Aorta (tissue), 5 donors: ENCODE measurements at regions of chr2 and their contacts with region 1.

Region 1: GRCh38 chr2:218269899-218270720 is at the starts of genes AAMP and PNKD:
- DNase-seq: peak; percentile 100
- ATAC-seq: peak; percentile 97
- H3K4me3 ChIP-seq: peak within 1 kb of the TSS; percentile 74 to 92
- H3K27ac ChIP-seq: peak within 1 kb of the TSS in 1 of 2 donors; percentile 9
- H3K4me1 ChIP-seq: no peaks in the 10 kb centered on the region
- H3K27me3 ChIP-seq: no peaks in the 10 kb centered on the region
- total RNA-seq, gene AAMP: 50.8 to 54.7 TPM
- total RNA-seq, gene PNKD: 26.9 to 40.2 TPM

Region 2: DNA sequence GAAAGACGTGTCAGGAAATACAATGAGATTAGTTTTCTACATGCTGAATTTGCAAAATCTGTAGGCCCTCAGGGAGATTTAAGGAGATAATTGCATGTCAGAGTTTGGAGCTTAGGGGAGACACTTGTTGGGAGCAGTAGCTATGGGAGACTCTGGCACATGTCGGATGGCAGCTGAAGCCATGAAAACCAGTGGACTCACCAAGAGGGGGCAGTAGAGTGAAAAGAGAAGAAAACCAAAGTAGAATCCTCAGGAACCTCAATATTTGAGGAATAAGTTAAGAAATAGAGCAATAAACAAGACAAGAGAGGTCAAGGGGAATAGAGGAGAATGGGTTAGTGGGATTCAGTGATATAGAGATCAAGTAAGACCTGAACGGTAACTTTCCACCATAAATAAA is 176.2 kb before region 1 on chr2:
- intact Hi-C with region 1: no loop called
- DNase-seq: no peak
- ATAC-seq: no peak
- H3K4me3 ChIP-seq: no peak overlapping the region
- H3K27ac ChIP-seq: no peak overlapping the region
- H3K4me1 ChIP-seq: no peaks in the 10 kb centered on the region
- H3K27me3 ChIP-seq: no peaks in the 10 kb centered on the region

Region 3: GRCh38 chr2:218186355-218186766 is 83.7 kb before region 1 on chr2:
- intact Hi-C with region 1: loop called in 1 of 2 experiments (anchors 5 kb)
- DNase-seq: peak; percentile 70 to 83
- ATAC-seq: peak; percentile 89
- H3K4me3 ChIP-seq: no peak overlapping the region
- H3K27ac ChIP-seq: no peak overlapping the region
- H3K4me1 ChIP-seq: peaks cover 0 to 3% of the 10 kb centered on the region in 2 donors
- H3K27me3 ChIP-seq: no peaks in the 10 kb centered on the region

Region 4: GRCh38 chr2:218290316-218291261 is 20.5 kb after region 1 on chr2:
- intact Hi-C with region 1: loop called in 1 of 2 experiments (anchors 2 kb)
- DNase-seq: no peak
- ATAC-seq: no peak
- H3K4me3 ChIP-seq: peak overlapping the region; percentile 59 to 94
- H3K27ac ChIP-seq: peak overlapping the region; percentile 46 to 92
- H3K4me1 ChIP-seq: peaks cover 0 to 3% of the 10 kb centered on the region in 2 donors
- H3K27me3 ChIP-seq: no peaks in the 10 kb centered on the region

Region 5: GRCh38 chr2:218322895-218323808 is 53.0 kb after region 1 on chr2:
- intact Hi-C with region 1: no loop called
- DNase-seq: peak; percentile 87 to 90
- ATAC-seq: peak; percentile 82
- H3K4me3 ChIP-seq: peak overlapping the region; percentile 64 to 70
- H3K27ac ChIP-seq: no peak overlapping the region
- H3K4me1 ChIP-seq: no peaks in the 10 kb centered on the region
- H3K27me3 ChIP-seq: no peaks in the 10 kb centered on the region

Region 6: GRCh38 chr2:218568190-218569037 is 298.3 kb after region 1 on chr2 and contains the starts of genes CNOT9 and USP37:
- intact Hi-C with region 1: loop called in 1 of 2 experiments (anchors 10 kb)
- DNase-seq: peak; percentile 100
- ATAC-seq: peak; percentile 100
- H3K4me3 ChIP-seq: peak within 1 kb of the TSS; percentile 63 to 80
- H3K27ac ChIP-seq: peak within 1 kb of the TSS; percentile 2 to 82
- H3K4me1 ChIP-seq: no peaks in the 10 kb centered on the region
- H3K27me3 ChIP-seq: no peaks in the 10 kb centered on the region
- total RNA-seq, gene CNOT9: 35.6 TPM
- total RNA-seq, gene USP37: 13.6 to 22.2 TPM